Left ventricle myocardium superior (tissue), 1 donor: ENCODE measurements at regions of chr17 and their contacts with region 1.

Region 1: GRCh38 chr17:42322382-42323267 is 34.3 kb downstream of the STAT5A start:
- DNase-seq: peak; percentile 95
- ATAC-seq: peak; percentile 86

Region 2: DNA sequence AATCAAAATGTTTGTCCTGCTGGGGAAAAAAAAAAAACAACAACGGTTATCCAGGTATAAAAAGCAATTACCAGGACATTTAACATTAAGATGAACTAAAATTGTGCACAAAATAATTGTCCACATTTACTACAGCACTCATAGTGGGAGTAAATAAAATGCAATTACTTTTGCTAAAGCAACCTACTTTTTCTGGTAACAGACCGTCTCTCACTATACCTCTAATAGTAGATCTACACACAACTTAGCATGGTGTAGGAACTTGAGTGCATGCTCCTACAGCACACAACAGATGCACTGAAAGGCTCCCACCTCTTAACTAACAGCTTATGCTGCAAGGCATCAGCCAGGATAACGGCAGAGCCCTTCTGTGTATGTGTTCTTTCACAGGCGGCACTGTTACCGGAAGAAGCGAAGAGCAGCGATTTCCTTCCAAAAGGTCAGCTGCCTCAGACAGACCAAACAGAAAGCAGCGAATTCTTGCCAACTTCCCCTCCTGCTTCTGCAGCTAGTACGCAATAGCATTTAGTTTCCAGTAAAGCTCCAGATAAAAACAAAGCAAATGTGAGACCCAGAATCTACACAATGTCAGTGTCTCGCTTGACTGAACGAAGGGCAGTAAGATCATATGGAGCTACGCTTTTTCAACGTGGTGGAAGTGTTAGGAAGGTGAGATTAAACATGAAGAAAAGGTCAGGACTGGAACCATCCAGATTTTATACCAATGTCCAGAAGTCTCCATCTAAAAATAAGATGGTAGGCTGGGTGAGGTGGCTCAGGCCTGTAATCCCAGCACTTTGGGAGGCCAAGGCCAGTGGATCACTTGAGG is 74.1 kb before region 1 on chr17:
- intact Hi-C with region 1: no loop called
- DNase-seq: peak; percentile 52
- ATAC-seq: peak; percentile 96

Region 3: DNA sequence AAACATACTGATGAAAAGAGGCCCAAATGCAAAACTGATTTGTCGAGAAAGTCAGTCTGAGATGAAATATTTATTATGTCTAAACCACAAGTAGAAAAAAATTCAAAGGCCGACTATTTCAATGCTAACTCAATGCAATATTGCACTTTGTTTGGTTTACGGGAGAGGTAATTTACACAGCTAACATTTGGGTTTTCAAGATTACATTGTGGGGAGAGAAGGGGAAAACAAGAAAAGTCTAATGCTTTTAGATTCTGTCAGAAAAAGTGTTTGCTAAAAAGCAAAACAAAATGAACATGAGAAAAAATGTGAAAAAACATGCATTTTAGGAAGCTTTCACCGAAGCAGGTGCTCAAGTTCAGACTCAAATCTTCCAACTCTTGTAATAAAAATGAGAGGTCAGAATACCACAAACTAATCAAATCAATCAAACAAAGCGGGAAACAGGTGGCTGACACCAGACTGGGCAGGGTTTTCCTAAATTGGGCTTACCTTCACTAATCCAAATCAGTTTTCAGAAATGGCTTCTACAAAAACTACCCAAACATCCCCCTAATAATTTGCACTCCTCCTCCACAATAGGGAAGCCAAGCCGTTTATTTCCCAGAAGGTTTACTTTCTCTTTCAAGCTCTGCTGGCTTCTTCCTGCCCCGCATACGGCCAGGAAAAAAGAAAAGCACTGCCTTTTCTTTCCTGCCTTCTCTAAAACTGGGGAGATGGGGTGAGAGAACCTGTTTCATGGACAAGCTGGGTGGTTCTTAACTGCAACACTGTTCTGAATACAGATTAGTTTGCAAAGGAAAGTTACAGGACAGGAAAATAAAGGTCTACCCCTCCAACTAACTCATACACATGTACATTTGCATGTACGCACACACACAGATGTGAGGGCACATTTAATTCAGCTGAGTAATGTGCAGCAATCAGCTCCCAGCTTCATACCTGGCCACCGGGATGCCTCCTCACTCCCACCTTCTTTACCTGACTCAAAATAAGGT is 56.3 kb after region 1 on chr17:
- intact Hi-C with region 1: no loop called
- DNase-seq: no peak
- ATAC-seq: peak; percentile 61

Region 4: DNA sequence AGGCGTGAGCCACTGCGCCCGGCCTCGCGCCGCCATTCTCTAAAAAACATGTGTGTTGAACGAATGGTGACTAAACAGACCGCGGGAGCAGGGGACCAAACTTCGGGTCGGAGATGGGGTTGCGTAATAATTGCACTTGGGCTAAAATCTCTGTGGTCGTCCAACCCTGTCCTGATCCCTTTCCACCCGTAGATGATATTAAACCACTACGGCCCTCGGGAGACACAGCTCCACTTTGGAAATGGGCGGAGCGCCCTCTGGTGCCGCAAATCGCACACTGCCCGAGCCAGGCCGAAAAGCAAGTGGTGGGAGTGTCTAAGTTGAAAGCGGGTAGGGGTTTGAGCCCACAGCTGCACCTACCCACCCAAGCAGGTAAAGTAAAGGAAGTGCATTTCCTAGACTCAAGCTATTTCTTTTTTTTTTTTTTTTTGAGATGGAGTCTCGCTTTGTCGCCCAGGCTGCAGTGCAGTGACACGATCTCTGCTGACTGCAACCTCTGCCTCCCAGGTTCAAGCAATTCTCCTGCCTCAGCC is 83.4 kb after region 1 on chr17:
- intact Hi-C with region 1: loop called (anchors 10 kb)
- DNase-seq: peak; percentile 92
- ATAC-seq: peak; percentile 70

Region 5: GRCh38 chr17:42459801-42460281 is 137.2 kb after region 1 on chr17:
- intact Hi-C with region 1: loop called (anchors 10 kb)
- DNase-seq: no peak
- ATAC-seq: peak; percentile 15

Region 6: DNA sequence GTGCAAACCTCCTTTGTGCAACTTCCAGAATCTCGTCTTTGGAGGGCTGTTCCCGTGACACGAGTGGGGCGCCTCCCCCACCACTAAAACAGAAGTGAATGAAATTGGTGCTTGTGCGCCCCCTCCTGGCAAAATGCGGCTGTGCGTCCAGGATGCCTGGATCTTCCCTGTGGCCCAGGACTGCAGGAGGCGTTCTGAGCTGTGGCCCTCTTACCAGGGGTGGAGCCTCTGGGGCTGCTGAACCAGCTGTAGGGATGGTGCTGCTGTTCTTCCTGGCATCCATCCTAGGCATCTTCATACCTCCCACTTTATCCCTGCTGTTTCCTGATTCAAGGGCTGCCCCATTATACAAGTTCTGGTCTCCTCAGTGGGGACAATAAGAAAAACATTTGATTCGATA is 194.9 kb after region 1 on chr17:
- intact Hi-C with region 1: loop called (anchors 10 kb)
- DNase-seq: peak; percentile 93
- ATAC-seq: peak; percentile 62